H1 (cell line): ENCODE measurements at regions of chr1 and their contacts with region 1.

Region 1: DNA sequence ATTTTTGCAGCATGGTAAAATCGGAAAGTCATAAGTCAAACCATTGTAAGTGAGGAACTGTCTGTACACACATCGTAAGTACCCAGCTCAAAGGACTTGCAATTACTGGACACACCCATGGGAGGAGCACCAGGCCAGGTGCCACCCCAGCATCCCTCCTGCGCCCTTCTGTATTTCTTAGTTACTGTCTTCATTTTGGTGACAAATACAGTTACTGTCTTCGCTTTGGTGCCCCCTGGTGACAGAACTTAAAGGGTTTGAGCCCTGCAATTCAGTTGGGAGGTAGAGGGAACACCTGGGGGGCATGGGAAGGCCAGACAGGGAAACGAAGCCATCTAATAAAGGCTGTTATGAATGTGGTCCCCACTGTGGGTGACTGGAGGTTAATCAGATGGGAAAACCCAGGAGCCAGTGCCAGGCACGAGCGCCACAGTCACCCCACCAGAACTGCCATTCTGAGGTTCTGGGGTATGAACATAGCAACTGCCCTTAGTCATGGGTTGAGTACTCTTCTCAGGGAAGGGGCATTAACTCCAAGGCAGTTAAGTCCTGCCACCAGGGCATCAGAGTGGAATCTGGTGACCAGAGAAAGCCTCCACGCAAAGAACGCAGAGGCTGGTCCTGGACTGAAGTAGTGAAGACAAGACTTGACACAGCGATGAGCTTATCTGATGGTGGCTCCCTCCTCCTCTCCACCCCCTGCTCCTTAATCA is 612.9 kb downstream of the PTPRU start:
- DNase-seq: peak; percentile 56 to 84
- H3K4me3 ChIP-seq: no peak overlapping the region
- H3K27ac ChIP-seq: no peak overlapping the region
- H3K4me1 ChIP-seq: no peaks in the 10 kb centered on the region
- H3K27me3 ChIP-seq: no peaks in the 10 kb centered on the region
- CTCF ChIP-seq: peak; percentile 18 to 86 (median 72)
- EP300 ChIP-seq: no peak
- POLR2A ChIP-seq: no peak
- RAD21 ChIP-seq: peak; percentile 64 to 80

Region 2: DNA sequence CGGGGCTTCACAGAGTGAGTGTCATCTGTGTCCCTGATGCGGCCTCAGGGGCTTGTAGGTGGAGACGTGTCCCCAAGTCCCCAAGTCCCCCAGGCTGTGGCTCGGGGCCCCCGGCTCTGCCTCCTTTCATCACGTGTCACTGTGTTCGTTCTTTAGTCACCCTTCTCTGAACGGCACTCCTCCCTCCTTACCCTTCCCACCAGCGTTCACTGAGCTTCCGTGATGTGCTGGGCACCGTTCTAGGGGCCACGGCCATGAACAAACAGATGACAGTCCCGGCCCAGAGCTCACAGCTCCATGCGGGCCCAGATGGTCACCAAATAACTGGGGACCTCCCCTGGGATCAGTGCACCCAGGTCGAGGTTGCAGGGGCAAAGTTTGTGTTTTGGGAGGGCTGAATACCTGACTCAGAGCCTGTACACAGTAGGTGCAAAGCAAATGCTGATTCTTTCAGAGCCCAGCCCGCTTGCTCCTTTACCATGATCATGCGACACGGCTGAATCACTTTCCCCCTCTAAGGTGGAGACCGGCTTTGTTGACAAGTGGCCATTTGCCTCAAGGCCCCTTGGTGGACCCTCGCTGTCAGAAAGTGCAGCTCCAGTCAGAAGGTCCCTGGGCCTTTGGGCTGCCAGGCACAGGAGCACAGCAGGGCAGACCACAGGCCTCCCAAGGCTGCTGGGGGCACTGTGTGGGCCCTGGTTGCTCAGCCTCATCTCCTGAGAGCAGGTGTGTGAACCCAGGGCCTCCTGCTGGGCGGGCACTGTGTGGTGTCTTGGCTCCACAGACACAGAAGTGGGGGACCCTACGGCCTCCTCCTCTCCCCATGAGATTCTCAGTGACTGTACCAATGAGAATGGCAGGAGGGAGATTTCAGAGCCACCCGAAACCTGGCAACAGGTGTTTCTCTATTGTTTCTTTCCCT is 20.4 kb before region 1 on chr1:
- CTCF ChIA-PET with region 1: interaction called, 11 read pairs
- POLR2A ChIA-PET with region 1: no interaction called
- DNase-seq: peak in 1 of 2 experiments; percentile 32
- H3K4me3 ChIP-seq: no peak overlapping the region
- H3K27ac ChIP-seq: no peak overlapping the region
- H3K4me1 ChIP-seq: peaks cover 0 to 2% (median 0%) of the 10 kb centered on the region in 4 experiments; a peak in 1 of 7 replicates
- H3K27me3 ChIP-seq: no peaks in the 10 kb centered on the region
- CTCF ChIP-seq: no peak
- EP300 ChIP-seq: no peak
- POLR2A ChIP-seq: no peak
- RAD21 ChIP-seq: no peak

Region 3: GRCh38 chr1:29836651-29837646 is 12.2 kb before region 1 on chr1:
- CTCF ChIA-PET with region 1: interaction called, 19 read pairs
- POLR2A ChIA-PET with region 1: no interaction called
- DNase-seq: peak in 1 of 2 experiments; percentile 41
- H3K4me3 ChIP-seq: no peak overlapping the region
- H3K27ac ChIP-seq: no peak overlapping the region
- H3K4me1 ChIP-seq: peaks cover 0 to 3% (median 2%) of the 10 kb centered on the region in 4 experiments; a peak in 3 of 7 replicates
- H3K27me3 ChIP-seq: no peaks in the 10 kb centered on the region
- CTCF ChIP-seq: no peak
- EP300 ChIP-seq: no peak
- POLR2A ChIP-seq: no peak
- RAD21 ChIP-seq: no peak

Region 4: DNA sequence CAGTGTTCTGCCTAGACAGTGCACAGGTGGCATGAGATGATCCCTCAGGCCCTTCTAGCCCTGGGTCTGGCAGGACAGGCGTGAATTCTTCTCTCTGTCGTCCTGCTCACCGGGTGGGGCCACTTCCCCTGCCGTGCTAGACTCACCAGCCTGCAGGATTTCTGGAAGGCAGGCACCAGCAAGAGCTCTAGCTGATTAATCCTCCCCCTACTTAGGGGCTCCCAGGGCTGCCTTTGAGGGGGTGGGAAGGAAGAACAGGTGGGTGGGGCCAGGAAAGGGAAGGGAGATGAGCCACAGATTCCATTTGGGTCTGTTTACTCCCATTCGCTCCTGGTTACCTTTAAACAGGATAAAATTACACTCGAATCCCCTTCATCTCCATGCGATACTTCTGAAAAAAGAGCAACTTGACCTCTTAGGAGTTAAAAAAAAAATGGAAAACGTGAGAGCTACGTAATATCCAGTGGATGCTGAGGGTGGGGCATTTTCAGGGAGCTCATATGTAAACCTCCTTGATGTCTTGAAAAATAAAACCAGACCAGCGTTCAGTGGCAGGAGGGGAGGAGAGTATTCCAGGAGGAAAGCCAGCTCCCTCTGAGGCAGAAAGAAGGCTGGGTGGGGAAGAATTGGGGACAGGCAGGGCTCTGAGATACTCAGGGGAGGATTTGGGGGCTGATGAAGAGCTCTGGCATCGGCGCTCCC is 52.6 kb after region 1 on chr1:
- CTCF ChIA-PET with region 1: interaction called, 18 read pairs
- POLR2A ChIA-PET with region 1: no interaction called
- DNase-seq: no peak
- H3K4me3 ChIP-seq: no peak overlapping the region; a peak in 1 of 8 replicates
- H3K27ac ChIP-seq: no peak overlapping the region
- H3K4me1 ChIP-seq: peaks cover 3 to 14% (median 5%) of the 10 kb centered on the region in 4 experiments; a peak in 6 of 7 replicates
- H3K27me3 ChIP-seq: no peaks in the 10 kb centered on the region
- CTCF ChIP-seq: no peak
- EP300 ChIP-seq: no peak
- POLR2A ChIP-seq: no peak
- RAD21 ChIP-seq: no peak

Region 5: GRCh38 chr1:29924017-29924431 is 74.8 kb after region 1 on chr1:
- CTCF ChIA-PET with region 1: no interaction called
- POLR2A ChIA-PET with region 1: no interaction called
- DNase-seq: no peak
- H3K4me3 ChIP-seq: no peak overlapping the region
- H3K27ac ChIP-seq: no peak overlapping the region
- H3K4me1 ChIP-seq: peaks cover 9 to 22% (median 16%) of the 10 kb centered on the region in 4 experiments
- H3K27me3 ChIP-seq: no peaks in the 10 kb centered on the region
- CTCF ChIP-seq: no peak
- EP300 ChIP-seq: no peak
- POLR2A ChIP-seq: no peak
- RAD21 ChIP-seq: 0 out of 4 replicates have a peak, but pooled peaks of 1 of the 2 experiments have one; percentile 7